HepG2 (cell line): ENCODE measurements at regions of chr20 and their contacts with region 1.

Region 1: GRCh38 chr20:24100385-24101011 is 111.9 kb upstream of the GGTLC1 start:
- DNase-seq: peak; percentile 70
- ATAC-seq: peak; percentile 98
- H3K4me3 ChIP-seq: no peak overlapping the region
- H3K27ac ChIP-seq: no peak overlapping the region
- H3K4me1 ChIP-seq: no peaks in the 10 kb centered on the region
- H3K27me3 ChIP-seq: peaks cover 0 to 5% of the 10 kb centered on the region in 2 experiments; a peak in 1 of 5 replicates
- CTCF ChIP-seq: peak; percentile 84
- EP300 ChIP-seq: no peak
- POLR2A ChIP-seq: no peak
- RAD21 ChIP-seq: peak; percentile 63

Region 2: GRCh38 chr20:23889775-23890211 is 210.7 kb before region 1 on chr20:
- CTCF ChIA-PET with region 1: no interaction called
- POLR2A ChIA-PET with region 1: no interaction called
- in situ Hi-C with region 1: no loop called
- intact Hi-C with region 1: loop called (anchors 2 kb)
- DNase-seq: peak; percentile 74
- ATAC-seq: peak; percentile 99
- H3K4me3 ChIP-seq: no peak overlapping the region
- H3K27ac ChIP-seq: no peak overlapping the region
- H3K4me1 ChIP-seq: no peaks in the 10 kb centered on the region
- H3K27me3 ChIP-seq: peaks cover 0 to 3% of the 10 kb centered on the region in 2 experiments; a peak in 1 of 5 replicates
- CTCF ChIP-seq: peak; percentile 98
- EP300 ChIP-seq: no peak
- POLR2A ChIP-seq: no peak
- RAD21 ChIP-seq: peak; percentile 94

Region 3: DNA sequence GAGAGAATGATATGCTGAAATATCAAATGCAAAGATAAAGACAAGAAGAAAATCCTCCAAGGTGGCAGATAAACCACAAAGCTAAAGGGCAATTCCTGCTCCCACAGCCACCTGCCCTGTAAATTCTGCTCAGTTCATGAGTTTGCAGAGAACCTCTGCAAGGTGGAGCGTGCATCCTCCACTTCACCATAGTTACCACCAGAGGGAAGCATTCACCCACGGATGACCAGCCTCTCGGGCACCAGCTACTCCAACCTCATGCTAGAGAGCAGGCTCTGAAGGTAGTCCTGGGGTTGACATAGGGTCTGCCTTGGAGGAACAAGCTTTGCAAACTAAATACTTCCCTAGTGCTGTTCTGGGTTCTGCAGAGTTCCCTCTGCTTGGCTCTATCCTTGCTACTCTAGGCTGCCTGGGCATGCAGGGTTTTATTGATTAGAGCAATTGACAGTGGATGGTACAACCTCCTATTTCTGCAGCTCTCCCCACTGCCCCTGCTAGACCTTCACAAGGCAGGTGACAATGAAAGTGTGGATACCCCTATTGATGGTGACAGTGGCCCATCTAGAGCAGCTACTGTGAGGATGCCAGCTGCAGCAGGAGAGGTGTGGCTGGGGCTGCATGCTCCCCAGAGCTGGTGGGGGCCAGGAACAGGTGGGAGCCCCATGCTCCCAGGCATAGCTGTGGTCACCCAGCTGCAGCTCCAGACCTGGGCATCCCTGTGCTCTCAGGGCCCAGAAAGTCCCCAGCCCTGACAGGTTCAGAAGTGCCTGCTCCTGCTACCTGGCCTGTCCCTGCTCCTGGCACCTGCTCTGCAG is 163.0 kb before region 1 on chr20:
- CTCF ChIA-PET with region 1: interaction called, 17 read pairs
- POLR2A ChIA-PET with region 1: no interaction called
- in situ Hi-C with region 1: no loop called
- intact Hi-C with region 1: loop called (anchors 5 kb)
- DNase-seq: peak; percentile 52
- ATAC-seq: peak; percentile 100
- H3K4me3 ChIP-seq: no peak overlapping the region
- H3K27ac ChIP-seq: no peak overlapping the region
- H3K4me1 ChIP-seq: no peaks in the 10 kb centered on the region
- H3K27me3 ChIP-seq: no peaks in the 10 kb centered on the region
- CTCF ChIP-seq: peak; percentile 95
- EP300 ChIP-seq: no peak
- POLR2A ChIP-seq: no peak
- RAD21 ChIP-seq: peak; percentile 95

Region 4: GRCh38 chr20:24064915-24065314 is 35.6 kb before region 1 on chr20:
- CTCF ChIA-PET with region 1: no interaction called
- POLR2A ChIA-PET with region 1: no interaction called
- in situ Hi-C with region 1: no loop called
- intact Hi-C with region 1: loop called (anchors 1 kb)
- DNase-seq: no peak
- ATAC-seq: no peak
- H3K4me3 ChIP-seq: no peak overlapping the region
- H3K27ac ChIP-seq: no peak overlapping the region
- H3K4me1 ChIP-seq: no peaks in the 10 kb centered on the region
- H3K27me3 ChIP-seq: no peaks in the 10 kb centered on the region
- CTCF ChIP-seq: no peak
- EP300 ChIP-seq: no peak
- POLR2A ChIP-seq: no peak
- RAD21 ChIP-seq: no peak